ENCODE measurements at regions of chr9 and their contacts with region 1.

Region 1: DNA sequence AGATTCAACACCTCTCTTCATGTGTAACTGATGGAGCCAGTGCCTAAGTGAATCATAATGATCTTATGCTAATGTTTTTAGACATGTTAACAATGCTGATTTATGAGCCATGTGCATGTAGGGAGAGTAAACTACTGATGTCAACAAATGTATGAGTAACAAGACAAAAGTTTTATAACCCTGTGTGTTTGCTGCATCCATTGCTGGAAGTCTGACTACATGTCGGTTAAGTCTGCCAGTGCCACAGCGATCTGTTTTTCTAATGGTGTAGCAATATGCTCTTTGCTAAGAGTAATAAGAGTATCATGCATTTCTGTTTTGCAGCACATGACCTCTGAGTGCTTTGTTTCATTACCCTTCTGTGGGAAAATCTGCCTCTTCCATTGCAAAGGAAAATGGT is 26.4 kb upstream of the TMOD1 start:
- DNase-seq: no peak
- H3K4me3 ChIP-seq: no peak overlapping the region
- H3K27ac ChIP-seq: no peak overlapping the region
- H3K4me1 ChIP-seq: no peaks in the 10 kb centered on the region
- H3K27me3 ChIP-seq: no peaks in the 10 kb centered on the region
- CTCF ChIP-seq: no peak
- EP300 ChIP-seq: no peak
- POLR2A ChIP-seq: no peak
- RAD21 ChIP-seq: no peak

Region 2: GRCh38 chr9:97243606-97244005 is 231.5 kb before region 1 on chr9:
- CTCF ChIA-PET with region 1: no interaction called
- POLR2A ChIA-PET with region 1: no interaction called
- DNase-seq: no peak
- H3K4me3 ChIP-seq: no peak overlapping the region
- H3K27ac ChIP-seq: no peak overlapping the region
- H3K4me1 ChIP-seq: no peaks in the 10 kb centered on the region
- H3K27me3 ChIP-seq: no peaks in the 10 kb centered on the region
- CTCF ChIP-seq: no peak
- EP300 ChIP-seq: no peak
- POLR2A ChIP-seq: no peak
- RAD21 ChIP-seq: no peak

Region 3: GRCh38 chr9:97487107-97487506 is 12.0 kb after region 1 on chr9:
- CTCF ChIA-PET with region 1: interaction called, 69 read pairs
- POLR2A ChIA-PET with region 1: no interaction called
- DNase-seq: no peak
- H3K4me3 ChIP-seq: no peak overlapping the region
- H3K27ac ChIP-seq: no peak overlapping the region
- H3K4me1 ChIP-seq: no peaks in the 10 kb centered on the region
- H3K27me3 ChIP-seq: peaks cover 0 to 3% (median 0%) of the 10 kb centered on the region in 4 experiments; a peak in 2 of 7 replicates
- CTCF ChIP-seq: peak in 1 of 3 experiments; percentile 40; a peak in 2 of 4 replicates
- EP300 ChIP-seq: no peak
- POLR2A ChIP-seq: no peak
- RAD21 ChIP-seq: no peak